HepG2 (cell line): ENCODE measurements at regions of chr11 and their contacts with region 1.

Region 1: GRCh38 chr11:78228467-78228866 is 39.7 kb downstream of the USP35 start:
- DNase-seq: peak; percentile 65
- ATAC-seq: peak; percentile 88
- H3K4me3 ChIP-seq: no peak overlapping the region
- H3K27ac ChIP-seq: no peak overlapping the region
- H3K4me1 ChIP-seq: peaks cover 18% of the 10 kb centered on the region
- H3K27me3 ChIP-seq: no peaks in the 10 kb centered on the region
- CTCF ChIP-seq: peak; percentile 81
- EP300 ChIP-seq: peak in 1 of 2 experiments; percentile 8; a peak in 1 of 4 replicates
- POLR2A ChIP-seq: no peak
- RAD21 ChIP-seq: peak; percentile 75

Region 2: DNA sequence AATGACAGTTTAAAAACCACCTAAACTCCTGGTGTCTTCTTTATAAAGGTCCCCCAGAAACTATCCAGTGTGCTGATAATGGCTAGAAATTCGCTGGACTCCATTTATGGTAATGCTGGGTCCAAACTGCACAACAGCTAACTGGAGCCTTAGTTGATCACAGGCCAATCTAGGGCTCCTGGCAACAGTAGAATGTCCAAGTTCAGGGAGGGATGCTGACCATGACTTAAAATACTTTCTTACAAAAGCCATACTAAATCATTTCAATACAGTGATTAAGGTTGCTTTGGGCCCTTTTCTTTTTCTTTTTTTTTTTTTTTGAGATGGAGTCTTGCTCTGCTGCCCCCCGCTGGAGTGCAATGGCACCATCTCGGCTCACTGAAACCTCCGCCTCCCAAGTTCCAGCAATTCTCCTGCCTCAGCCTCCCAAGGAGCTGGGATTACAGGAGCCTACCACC is 203.6 kb after region 1 on chr11:
- CTCF ChIA-PET with region 1: interaction called, 7 read pairs
- POLR2A ChIA-PET with region 1: no interaction called
- in situ Hi-C with region 1: no loop called
- intact Hi-C with region 1: loop called (anchors 1 kb)
- DNase-seq: no peak
- ATAC-seq: peak; percentile 59; the same call in 2 of the 3 replicates
- H3K4me3 ChIP-seq: no peak overlapping the region
- H3K27ac ChIP-seq: no peak overlapping the region
- H3K4me1 ChIP-seq: no peaks in the 10 kb centered on the region
- H3K27me3 ChIP-seq: no peaks in the 10 kb centered on the region
- CTCF ChIP-seq: peak; percentile 53
- EP300 ChIP-seq: no peak
- POLR2A ChIP-seq: no peak
- RAD21 ChIP-seq: no peak

Region 3: DNA sequence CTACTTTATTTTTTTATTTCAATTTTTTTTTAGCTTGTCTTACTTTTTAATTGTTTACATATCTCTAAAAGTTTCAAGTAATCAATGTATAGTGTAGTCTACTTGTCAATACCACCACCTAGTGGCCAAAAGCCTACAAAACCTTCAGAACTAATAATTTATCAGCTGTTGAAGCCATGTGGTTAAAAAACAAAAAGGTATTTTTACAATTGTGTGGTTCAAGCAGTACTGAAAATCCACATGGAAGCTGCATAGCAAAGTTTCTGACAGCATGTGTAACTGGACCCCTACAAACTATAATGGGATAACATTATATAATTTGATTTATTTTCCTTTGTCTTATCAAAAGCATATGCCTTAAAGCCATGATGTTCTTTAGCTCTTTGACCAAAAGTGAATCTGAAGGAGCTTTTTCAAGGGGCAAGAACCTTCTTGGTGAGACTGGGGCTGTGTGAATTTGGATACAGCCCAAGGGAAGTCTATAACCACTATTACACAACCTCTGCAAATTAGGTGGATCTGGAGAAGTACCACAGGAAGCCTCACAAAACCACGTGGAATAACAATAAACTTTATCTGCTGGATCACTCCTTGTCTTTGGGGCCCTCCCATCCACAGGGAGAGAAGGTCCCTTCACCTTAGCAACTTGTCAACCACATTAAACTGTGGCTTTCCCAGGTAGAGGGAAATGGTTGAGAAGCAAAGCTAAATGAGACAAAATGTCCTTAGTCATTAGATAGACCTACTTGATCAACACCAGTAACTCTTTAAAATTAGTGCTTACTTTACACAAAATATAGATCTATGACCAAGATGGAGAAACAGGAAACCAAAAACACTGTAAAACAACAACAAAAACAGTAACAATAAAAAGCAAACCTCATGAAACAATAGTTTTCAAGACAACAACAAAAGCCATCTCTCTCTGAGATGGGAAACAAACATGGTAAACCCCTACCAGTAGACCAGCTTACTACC is 336.3 kb after region 1 on chr11:
- CTCF ChIA-PET with region 1: interaction called, 12 read pairs
- POLR2A ChIA-PET with region 1: no interaction called
- in situ Hi-C with region 1: loop called (anchors 5 kb)
- intact Hi-C with region 1: loop called (anchors 1 kb)
- DNase-seq: peak; percentile 60
- ATAC-seq: peak; percentile 59; the same call in 2 of the 3 replicates
- H3K4me3 ChIP-seq: no peak overlapping the region
- H3K27ac ChIP-seq: peak overlapping the region; percentile 10
- H3K4me1 ChIP-seq: peaks cover 51% of the 10 kb centered on the region
- H3K27me3 ChIP-seq: no peaks in the 10 kb centered on the region
- CTCF ChIP-seq: peak; percentile 64
- EP300 ChIP-seq: no peak
- POLR2A ChIP-seq: no peak
- RAD21 ChIP-seq: no peak